Heart right ventricle (tissue), 16 donors: ENCODE measurements at regions of chr11 and their contacts with region 1.

Region 1: DNA sequence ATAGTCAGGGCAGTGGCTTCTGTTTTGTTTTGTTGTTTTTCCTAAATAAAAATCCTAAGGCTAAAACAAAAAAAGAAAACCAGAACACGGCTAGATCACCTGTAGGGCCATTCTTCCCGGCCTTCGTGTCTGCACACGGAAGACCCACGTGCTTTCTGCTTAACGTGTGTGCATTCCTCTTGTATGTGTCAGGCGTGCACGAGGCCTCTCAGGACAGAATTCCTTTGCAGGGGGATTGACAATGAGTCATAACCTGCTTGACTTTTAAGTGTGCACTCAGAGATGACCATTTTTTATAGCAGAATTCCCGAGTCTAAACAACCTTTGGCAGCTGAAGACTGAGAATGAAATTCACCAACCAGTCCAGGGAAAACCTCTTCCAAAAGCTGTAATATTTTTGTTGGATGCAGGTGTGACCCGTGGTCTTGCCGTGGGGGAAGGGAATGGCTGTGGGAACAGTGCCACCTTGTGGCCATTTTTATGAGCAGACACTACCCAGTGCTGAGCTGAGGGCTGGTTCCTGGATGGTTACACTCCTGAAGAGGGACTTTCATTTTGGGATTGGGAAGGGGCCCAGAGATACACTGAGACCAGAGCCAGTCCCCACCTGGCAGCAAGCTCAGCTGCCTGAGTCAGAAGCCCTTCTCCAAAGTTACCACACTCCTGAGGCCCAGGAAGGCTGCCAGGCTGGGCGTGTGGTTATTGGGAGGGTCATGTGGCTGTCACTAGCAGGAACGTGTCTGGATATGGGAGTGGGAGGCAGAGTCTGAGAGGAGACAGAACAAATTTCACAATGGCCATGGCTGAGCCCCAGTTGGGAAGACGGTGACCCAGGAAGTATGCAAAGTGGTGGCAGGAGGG is 35.8 kb upstream of the DKK3 start:
- DNase-seq: peak; percentile 70 to 81
- ATAC-seq: peak; percentile 88 to 93 (median 92)
- H3K4me3 ChIP-seq: peak overlapping the region in 1 of 10 donors; percentile 1
- H3K27ac ChIP-seq: peak overlapping the region in 9 of 10 donors; percentile 21 to 73 (median 52)
- H3K4me1 ChIP-seq: peaks cover 4 to 28% (median 19%) of the 10 kb centered on the region in 9 donors
- H3K27me3 ChIP-seq: no peaks in the 10 kb centered on the region
- CTCF ChIP-seq: peak; percentile 84 to 96 (median 95)

Region 2: DNA sequence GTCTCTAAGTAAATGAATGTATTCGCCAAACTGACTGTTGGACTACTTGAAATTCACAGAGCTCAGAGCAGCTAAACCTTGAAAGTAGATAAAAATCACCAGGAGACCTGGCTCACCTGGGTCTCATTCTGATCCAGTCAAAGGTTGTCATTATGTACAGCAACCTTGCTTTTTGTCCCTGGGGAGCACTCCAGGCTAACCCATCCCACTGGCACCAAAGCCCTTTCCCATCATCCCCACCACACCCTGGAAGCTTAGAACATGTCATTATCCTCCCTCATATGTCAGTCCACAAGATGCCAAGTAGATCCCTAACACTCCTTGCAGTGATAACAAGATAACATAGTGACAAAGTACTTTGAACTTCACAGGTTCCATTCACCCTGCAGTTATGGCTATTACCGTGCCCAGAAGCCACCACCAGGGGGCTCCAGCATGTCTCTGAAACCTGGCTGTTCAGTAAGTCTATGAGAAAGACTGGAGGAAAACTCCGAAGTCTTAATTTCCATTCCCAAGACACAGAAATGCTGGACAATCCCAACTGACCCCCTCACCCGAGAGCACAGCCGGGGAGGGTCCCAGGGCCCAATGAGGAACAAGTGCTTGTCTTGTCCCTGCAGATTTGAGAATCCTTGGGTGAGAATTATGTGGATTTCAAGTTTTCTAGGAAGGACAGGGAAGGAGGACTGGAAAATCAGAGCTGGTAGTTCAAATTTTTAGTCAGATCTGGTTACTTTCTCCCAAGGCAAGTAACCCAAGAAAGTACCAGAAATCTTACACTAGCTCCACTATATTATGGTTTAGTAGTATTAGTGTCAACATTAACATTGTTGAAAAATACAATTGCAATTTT is 245.4 kb before region 1 on chr11:
- intact Hi-C with region 1: loop called in 9 of 10 experiments (anchors 1 to 10 kb)
- DNase-seq: peak; percentile 83 to 86
- ATAC-seq: peak; percentile 79 to 95 (median 91)
- H3K4me3 ChIP-seq: no peak overlapping the region
- H3K27ac ChIP-seq: no peak overlapping the region
- H3K4me1 ChIP-seq: peaks cover 0 to 9% (median 0%) of the 10 kb centered on the region in 9 donors
- H3K27me3 ChIP-seq: peaks cover 0 to 22% (median 0%) of the 10 kb centered on the region in 7 donors
- CTCF ChIP-seq: peak; percentile 81 to 97 (median 92)

Region 3: GRCh38 chr11:11841723-11842420 is 202.3 kb before region 1 on chr11 and contains the start of gene USP47:
- intact Hi-C with region 1: loop called in 1 of 10 experiments (anchors 5 kb)
- DNase-seq: peak; percentile 94 to 95
- ATAC-seq: peak; percentile 90 to 96 (median 94)
- H3K4me3 ChIP-seq: peak within 1 kb of the TSS; percentile 61 to 97 (median 84)
- H3K27ac ChIP-seq: peak within 1 kb of the TSS; percentile 93 to 99 (median 97)
- H3K4me1 ChIP-seq: peaks cover 0 to 47% (median 38%) of the 10 kb centered on the region in 9 donors
- H3K27me3 ChIP-seq: no peaks in the 10 kb centered on the region
- CTCF ChIP-seq: peak; percentile 38 to 81 (median 59)
- total RNA-seq, gene USP47: 46.4 to 56.4 (median 52.8) TPM

Region 4: GRCh38 chr11:11952036-11952435 is 92.2 kb before region 1 on chr11:
- intact Hi-C with region 1: loop called in 1 of 10 experiments (anchors 5 kb)
- DNase-seq: no peak
- ATAC-seq: no peak
- H3K4me3 ChIP-seq: no peak overlapping the region
- H3K27ac ChIP-seq: peak overlapping the region in 2 of 10 donors; percentile 1 to 39
- H3K4me1 ChIP-seq: peaks cover 0 to 26% (median 9%) of the 10 kb centered on the region in 9 donors
- H3K27me3 ChIP-seq: no peaks in the 10 kb centered on the region
- CTCF ChIP-seq: no peak

Region 5: GRCh38 chr11:11977206-11977938 is 66.8 kb before region 1 on chr11:
- intact Hi-C with region 1: loop called in 1 of 10 experiments (anchors 5 kb)
- DNase-seq: peak; percentile 71 to 83
- ATAC-seq: peak in 7 of 8 donors; percentile 17 to 49 (median 39)
- H3K4me3 ChIP-seq: peak overlapping the region in 2 of 10 donors; percentile 5
- H3K27ac ChIP-seq: peak overlapping the region; percentile 8 to 92 (median 86)
- H3K4me1 ChIP-seq: peaks cover 80 to 100% (median 96%) of the 10 kb centered on the region in 9 donors
- H3K27me3 ChIP-seq: no peaks in the 10 kb centered on the region
- CTCF ChIP-seq: no peak

Region 6: GRCh38 chr11:12281571-12282478 is 237.6 kb after region 1 on chr11:
- intact Hi-C with region 1: loop called (anchors 1 to 2 kb)
- DNase-seq: peak; percentile 82 to 86
- ATAC-seq: peak; percentile 40 to 76 (median 66)
- H3K4me3 ChIP-seq: no peak overlapping the region
- H3K27ac ChIP-seq: no peak overlapping the region
- H3K4me1 ChIP-seq: peaks cover 0 to 26% (median 13%) of the 10 kb centered on the region in 9 donors
- H3K27me3 ChIP-seq: no peaks in the 10 kb centered on the region
- CTCF ChIP-seq: peak; percentile 93 to 99 (median 97)